IMR-90 (cell line): ENCODE measurements at regions of chr16 and their contacts with region 1.

Region 1: GRCh38 chr16:17149904-17150483 is 320.8 kb downstream of the XYLT1 start:
- DNase-seq: no peak
- ATAC-seq: no peak
- H3K4me3 ChIP-seq: no peak overlapping the region
- H3K27ac ChIP-seq: no peak overlapping the region
- H3K4me1 ChIP-seq: no peaks in the 10 kb centered on the region
- H3K27me3 ChIP-seq: no peaks in the 10 kb centered on the region
- CTCF ChIP-seq: no peak
- POLR2A ChIP-seq: no peak
- RAD21 ChIP-seq: no peak

Region 2: GRCh38 chr16:16817199-16817598 is 332.8 kb before region 1 on chr16:
- CTCF ChIA-PET with region 1: no interaction called
- POLR2A ChIA-PET with region 1: no interaction called
- dilution Hi-C with region 1: no loop called
- in situ Hi-C with region 1: no loop called
- intact Hi-C with region 1: no loop called
- DNase-seq: no peak
- ATAC-seq: no peak
- H3K4me3 ChIP-seq: no peak overlapping the region
- H3K27ac ChIP-seq: no peak overlapping the region
- H3K4me1 ChIP-seq: no peaks in the 10 kb centered on the region
- H3K27me3 ChIP-seq: no peaks in the 10 kb centered on the region
- CTCF ChIP-seq: no peak
- POLR2A ChIP-seq: no peak
- RAD21 ChIP-seq: no peak

Region 3: DNA sequence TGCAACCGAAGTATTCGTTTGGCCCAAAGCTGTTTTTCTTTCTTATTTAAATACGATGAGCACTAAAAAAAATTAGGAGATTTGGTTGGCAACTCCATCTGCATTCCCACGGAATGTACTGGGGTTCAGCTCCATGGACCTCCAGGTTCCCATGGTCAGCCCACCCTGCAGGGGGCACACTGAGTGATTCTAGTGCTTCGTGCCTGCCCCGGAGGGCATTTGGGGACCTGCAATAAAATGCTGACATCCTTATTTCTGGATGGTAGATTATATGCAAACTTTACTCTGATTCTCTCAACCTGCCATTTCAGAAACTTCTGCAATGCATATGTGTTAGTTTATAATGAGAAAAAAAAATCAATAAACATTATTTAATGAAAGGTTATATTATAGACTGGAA is 18.6 kb before region 1 on chr16:
- CTCF ChIA-PET with region 1: no interaction called
- POLR2A ChIA-PET with region 1: no interaction called
- dilution Hi-C with region 1: no loop called
- in situ Hi-C with region 1: no loop called
- intact Hi-C with region 1: loop called (anchors 2 kb)
- DNase-seq: no peak
- ATAC-seq: no peak
- H3K4me3 ChIP-seq: no peak overlapping the region
- H3K27ac ChIP-seq: no peak overlapping the region
- H3K4me1 ChIP-seq: no peaks in the 10 kb centered on the region
- H3K27me3 ChIP-seq: no peaks in the 10 kb centered on the region
- CTCF ChIP-seq: no peak
- POLR2A ChIP-seq: no peak
- RAD21 ChIP-seq: no peak